ENCODE measurements at regions of chr1 and their contacts with region 1.

Region 1: DNA sequence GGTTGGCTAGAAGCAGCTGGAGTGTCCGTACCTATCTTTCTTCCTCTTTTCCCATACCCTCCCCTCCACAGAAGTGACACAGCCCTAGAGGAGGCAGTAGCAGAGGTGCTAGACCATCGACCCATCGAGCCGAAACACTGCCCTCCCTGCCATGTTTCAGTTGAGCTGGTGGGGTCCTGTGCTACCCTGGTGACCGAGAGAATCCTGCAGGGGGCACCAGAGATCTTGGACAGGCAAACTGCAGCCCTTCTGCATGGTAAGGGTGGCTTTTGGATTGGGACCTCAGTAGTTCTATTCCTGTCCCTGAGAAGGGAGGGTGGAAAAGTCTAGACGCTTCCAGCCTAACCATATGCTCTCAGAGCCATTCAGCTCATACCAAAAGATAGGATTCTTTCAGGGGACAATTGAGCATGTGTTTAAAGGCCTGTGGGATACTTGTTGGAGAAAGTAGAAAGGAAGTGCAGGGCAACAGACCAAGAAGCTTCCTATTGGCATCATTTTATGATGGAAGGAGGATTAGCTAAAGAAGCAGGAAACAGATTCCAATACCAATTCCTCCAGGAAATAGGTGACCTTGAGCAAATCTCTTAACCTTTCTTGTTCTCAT is 11.7 kb upstream of the BNIPL start:
- DNase-seq: peak; percentile 91
- H3K4me3 Mint-ChIP-seq: peak overlapping the region; percentile 36
- H3K27ac Mint-ChIP-seq: no peak overlapping the region
- H3K4me1 Mint-ChIP-seq: peaks cover 6% of the 10 kb centered on the region
- H3K27me3 Mint-ChIP-seq: no peaks in the 10 kb centered on the region

Region 2: GRCh38 chr1:151047925-151048645 is 23.4 kb after region 1 on chr1:
- CTCF ChIA-PET with region 1: interaction called, 24 read pairs
- intact Hi-C with region 1: no loop called
- DNase-seq: peak; percentile 66
- H3K4me3 Mint-ChIP-seq: peak overlapping the region; percentile 87
- H3K27ac Mint-ChIP-seq: peak overlapping the region; percentile 78
- H3K4me1 Mint-ChIP-seq: peaks cover 38% of the 10 kb centered on the region
- H3K27me3 Mint-ChIP-seq: no peaks in the 10 kb centered on the region

Region 3: GRCh38 chr1:151059078-151059907 is 34.6 kb after region 1 on chr1 and contains the start of gene CDC42SE1:
- CTCF ChIA-PET with region 1: interaction called, 9 read pairs
- intact Hi-C with region 1: loop called (anchors 1 kb)
- DNase-seq: peak; percentile 86
- H3K4me3 Mint-ChIP-seq: peak within 1 kb of the TSS; percentile 86
- H3K27ac Mint-ChIP-seq: peak within 1 kb of the TSS; percentile 98
- H3K4me1 Mint-ChIP-seq: peaks cover 53% of the 10 kb centered on the region
- H3K27me3 Mint-ChIP-seq: no peaks in the 10 kb centered on the region
- total RNA-seq, gene CDC42SE1: 98.1 to 99.0 TPM

Region 4: GRCh38 chr1:151070474-151071276 is 46.0 kb after region 1 on chr1 and contains the start of gene GABPB2:
- CTCF ChIA-PET with region 1: interaction called, 3 read pairs
- intact Hi-C with region 1: loop called (anchors 1 kb)
- DNase-seq: peak; percentile 92
- H3K4me3 Mint-ChIP-seq: peak within 1 kb of the TSS; percentile 99
- H3K27ac Mint-ChIP-seq: peak within 1 kb of the TSS; percentile 100
- H3K4me1 Mint-ChIP-seq: peaks cover 26% of the 10 kb centered on the region
- H3K27me3 Mint-ChIP-seq: no peaks in the 10 kb centered on the region
- total RNA-seq, gene GABPB2: 16.1 to 16.2 TPM

Region 5: DNA sequence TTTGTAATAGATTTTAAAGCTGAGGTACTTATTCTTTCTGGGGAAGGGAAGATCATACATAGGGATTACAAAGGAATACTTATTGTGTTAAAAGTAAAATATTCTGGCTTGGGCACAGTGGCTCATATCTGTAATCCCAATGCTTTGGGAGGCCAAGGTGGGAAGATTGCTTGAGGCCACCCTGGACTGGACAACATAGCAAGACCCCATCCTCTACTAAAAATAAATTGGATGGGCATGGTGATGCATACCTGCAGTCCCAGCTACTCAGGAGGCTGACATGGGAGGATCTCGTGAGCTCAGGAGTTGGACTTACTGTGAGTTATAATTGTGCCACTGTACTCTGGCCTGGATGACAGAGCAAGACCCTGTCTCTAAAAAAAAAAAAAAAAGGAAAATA is 73.5 kb after region 1 on chr1:
- CTCF ChIA-PET with region 1: interaction called, 11 read pairs
- intact Hi-C with region 1: loop called (anchors 1 kb)
- DNase-seq: no peak
- H3K4me3 Mint-ChIP-seq: no peak overlapping the region
- H3K27ac Mint-ChIP-seq: no peak overlapping the region
- H3K4me1 Mint-ChIP-seq: no peaks in the 10 kb centered on the region
- H3K27me3 Mint-ChIP-seq: no peaks in the 10 kb centered on the region

Region 6: GRCh38 chr1:151254217-151255213 is 229.9 kb after region 1 on chr1 and contains the start of gene PSMD4:
- CTCF ChIA-PET with region 1: interaction called, 4 read pairs
- intact Hi-C with region 1: loop called (anchors 1 kb)
- DNase-seq: peak; percentile 97
- H3K4me3 Mint-ChIP-seq: peak within 1 kb of the TSS; percentile 95
- H3K27ac Mint-ChIP-seq: peak within 1 kb of the TSS; percentile 92
- H3K4me1 Mint-ChIP-seq: peaks cover 31% of the 10 kb centered on the region
- H3K27me3 Mint-ChIP-seq: peaks cover 2% of the 10 kb centered on the region
- total RNA-seq, gene PSMD4: 167 to 192 TPM